Right cardiac atrium (tissue), 5 donors: ENCODE measurements at regions of chr7 and their contacts with region 1.

Region 1: GRCh38 chr7:147245292-147245691 is 1128.7 kb downstream of the CNTNAP2 start:
- DNase-seq: peak in 1 of 3 donors; percentile 17
- ATAC-seq: no peak
- H3K4me3 ChIP-seq: no peak overlapping the region
- H3K27ac ChIP-seq: no peak overlapping the region
- H3K4me1 ChIP-seq: no peaks in the 10 kb centered on the region
- H3K27me3 ChIP-seq: no peaks in the 10 kb centered on the region

Region 2: DNA sequence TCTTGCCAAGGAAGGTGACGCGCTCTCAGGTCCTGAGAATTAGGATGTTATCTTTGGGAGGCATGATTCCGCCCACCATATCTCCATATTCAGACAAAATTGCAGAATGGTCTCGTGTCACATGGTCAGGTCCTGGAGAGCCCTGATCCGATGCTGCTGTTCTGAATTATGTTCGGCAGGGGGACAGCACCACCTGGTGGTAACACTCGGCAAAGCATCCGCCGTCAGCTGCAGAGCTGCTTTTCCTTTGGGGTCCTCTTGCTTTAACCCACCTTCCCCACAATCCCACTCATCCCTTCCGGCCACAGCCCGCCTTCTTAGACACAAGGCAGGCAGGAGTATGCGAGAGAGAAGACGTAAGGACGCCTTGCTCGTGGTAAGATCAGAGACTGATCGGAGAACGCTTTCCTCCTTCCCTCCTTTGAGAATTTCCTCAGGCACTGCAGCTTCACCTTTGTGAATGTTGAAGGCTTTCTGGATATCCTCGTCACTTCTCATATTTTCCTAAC is 1017.5 kb after region 1 on chr7:
- intact Hi-C with region 1: loop called in 1 of 4 experiments (anchors 5 kb)
- DNase-seq: peak; percentile 59 to 88 (median 86)
- ATAC-seq: peak; percentile 74 to 85
- H3K4me3 ChIP-seq: no peak overlapping the region
- H3K27ac ChIP-seq: no peak overlapping the region
- H3K4me1 ChIP-seq: no peaks in the 10 kb centered on the region
- H3K27me3 ChIP-seq: no peaks in the 10 kb centered on the region